Natural killer cell (primary cell): ENCODE measurements at regions of chr10 and their contacts with region 1.

Region 1: GRCh38 chr10:22436884-22437619 is 91.8 kb downstream of the SPAG6 start:
- DNase-seq: peak; percentile 86 to 95
- ATAC-seq: peak; percentile 80 to 93 (median 85)
- H3K4me3 ChIP-seq: peak overlapping the region; percentile 73
- H3K4me3 Mint-ChIP-seq: peak overlapping the region; percentile 95
- H3K27ac ChIP-seq: peak overlapping the region; percentile 98
- H3K27ac Mint-ChIP-seq: peak overlapping the region; percentile 97
- H3K4me1 ChIP-seq: peaks cover 23% of the 10 kb centered on the region
- H3K4me1 Mint-ChIP-seq: peaks cover 37 to 43% of the 10 kb centered on the region in 2 donors
- H3K27me3 ChIP-seq: peaks cover 2% of the 10 kb centered on the region
- H3K27me3 Mint-ChIP-seq: no peaks in the 10 kb centered on the region
- CTCF ChIP-seq: no peak

Region 2: GRCh38 chr10:22003079-22003913 is 433.8 kb before region 1 on chr10 and contains the start of gene DNAJC1:
- intact Hi-C with region 1: loop called (anchors 2 kb)
- DNase-seq: peak; percentile 96 to 98
- ATAC-seq: peak; percentile 84 to 96 (median 89)
- H3K4me3 ChIP-seq: peak within 1 kb of the TSS; percentile 96
- H3K4me3 Mint-ChIP-seq: peak within 1 kb of the TSS; percentile 91
- H3K27ac ChIP-seq: peak within 1 kb of the TSS; percentile 97
- H3K27ac Mint-ChIP-seq: peak within 1 kb of the TSS; percentile 85 to 88
- H3K4me1 ChIP-seq: peaks cover 4% of the 10 kb centered on the region
- H3K4me1 Mint-ChIP-seq: peaks cover 38 to 45% of the 10 kb centered on the region in 2 donors
- H3K27me3 ChIP-seq: no peaks in the 10 kb centered on the region
- H3K27me3 Mint-ChIP-seq: peaks cover 0 to 5% of the 10 kb centered on the region in 2 donors
- CTCF ChIP-seq: peak; percentile 9
- total RNA-seq, gene DNAJC1: 38.4 to 63.7 (median 50.6) TPM

Region 3: GRCh38 chr10:22505911-22506685 is 69.0 kb after region 1 on chr10:
- intact Hi-C with region 1: loop called (anchors 1 kb)
- DNase-seq: peak; percentile 72 to 81
- ATAC-seq: peak; percentile 93 to 99 (median 99)
- H3K4me3 ChIP-seq: no peak overlapping the region
- H3K4me3 Mint-ChIP-seq: peak overlapping the region; percentile 85
- H3K27ac ChIP-seq: peak overlapping the region; percentile 54
- H3K27ac Mint-ChIP-seq: peak overlapping the region; percentile 86 to 89
- H3K4me1 ChIP-seq: peaks cover 32% of the 10 kb centered on the region
- H3K4me1 Mint-ChIP-seq: peaks cover 63 to 67% of the 10 kb centered on the region in 2 donors
- H3K27me3 ChIP-seq: no peaks in the 10 kb centered on the region
- H3K27me3 Mint-ChIP-seq: peaks cover 0 to 7% of the 10 kb centered on the region in 2 donors
- CTCF ChIP-seq: no peak